ENCODE measurements at regions of chr4 and their contacts with region 1.

Region 1: GRCh38 chr4:152735396-152735859 is 44.1 kb downstream of the TIGD4 start:
- DNase-seq: peak; percentile 38
- H3K4me3 ChIP-seq: no peak overlapping the region
- H3K27ac ChIP-seq: no peak overlapping the region
- H3K4me1 ChIP-seq: peaks cover 5% of the 10 kb centered on the region
- H3K27me3 ChIP-seq: no peaks in the 10 kb centered on the region
- CTCF ChIP-seq: peak; percentile 64 to 66

Region 2: GRCh38 chr4:152454398-152455011 is 280.9 kb before region 1 on chr4:
- CTCF ChIA-PET with region 1: no interaction called
- dilution Hi-C with region 1: no loop called
- in situ Hi-C with region 1: no loop called
- intact Hi-C with region 1: loop called (anchors 1 kb)
- DNase-seq: peak; percentile 24
- H3K4me3 ChIP-seq: no peak overlapping the region
- H3K27ac ChIP-seq: no peak overlapping the region
- H3K4me1 ChIP-seq: no peaks in the 10 kb centered on the region
- H3K27me3 ChIP-seq: no peaks in the 10 kb centered on the region
- CTCF ChIP-seq: peak; percentile 61 to 78

Region 3: GRCh38 chr4:152500800-152501434 is 234.5 kb before region 1 on chr4:
- CTCF ChIA-PET with region 1: no interaction called
- dilution Hi-C with region 1: no loop called
- in situ Hi-C with region 1: loop called in 1 of 2 experiments (anchors 25 kb)
- intact Hi-C with region 1: loop called (anchors 1 kb)
- DNase-seq: peak; percentile 68
- H3K4me3 ChIP-seq: no peak overlapping the region
- H3K27ac ChIP-seq: no peak overlapping the region
- H3K4me1 ChIP-seq: peaks cover 3% of the 10 kb centered on the region
- H3K27me3 ChIP-seq: no peaks in the 10 kb centered on the region
- CTCF ChIP-seq: peak; percentile 69 to 80

Region 4: GRCh38 chr4:152613841-152614721 is 121.3 kb before region 1 on chr4:
- CTCF ChIA-PET with region 1: no interaction called
- dilution Hi-C with region 1: no loop called
- in situ Hi-C with region 1: no loop called
- intact Hi-C with region 1: no loop called
- DNase-seq: no peak
- H3K4me3 ChIP-seq: no peak overlapping the region
- H3K27ac ChIP-seq: no peak overlapping the region
- H3K4me1 ChIP-seq: peaks cover 7% of the 10 kb centered on the region
- H3K27me3 ChIP-seq: no peaks in the 10 kb centered on the region
- CTCF ChIP-seq: no peak

Region 5: GRCh38 chr4:152634110-152634760 is 101.2 kb before region 1 on chr4:
- CTCF ChIA-PET with region 1: no interaction called
- dilution Hi-C with region 1: loop called (anchors 5 kb)
- in situ Hi-C with region 1: loop called in 1 of 2 experiments (anchors 25 kb)
- intact Hi-C with region 1: no loop called
- DNase-seq: peak; percentile 90
- H3K4me3 ChIP-seq: no peak overlapping the region
- H3K27ac ChIP-seq: peak overlapping the region; percentile 92
- H3K4me1 ChIP-seq: peaks cover 28% of the 10 kb centered on the region
- H3K27me3 ChIP-seq: no peaks in the 10 kb centered on the region
- CTCF ChIP-seq: no peak

Region 6: DNA sequence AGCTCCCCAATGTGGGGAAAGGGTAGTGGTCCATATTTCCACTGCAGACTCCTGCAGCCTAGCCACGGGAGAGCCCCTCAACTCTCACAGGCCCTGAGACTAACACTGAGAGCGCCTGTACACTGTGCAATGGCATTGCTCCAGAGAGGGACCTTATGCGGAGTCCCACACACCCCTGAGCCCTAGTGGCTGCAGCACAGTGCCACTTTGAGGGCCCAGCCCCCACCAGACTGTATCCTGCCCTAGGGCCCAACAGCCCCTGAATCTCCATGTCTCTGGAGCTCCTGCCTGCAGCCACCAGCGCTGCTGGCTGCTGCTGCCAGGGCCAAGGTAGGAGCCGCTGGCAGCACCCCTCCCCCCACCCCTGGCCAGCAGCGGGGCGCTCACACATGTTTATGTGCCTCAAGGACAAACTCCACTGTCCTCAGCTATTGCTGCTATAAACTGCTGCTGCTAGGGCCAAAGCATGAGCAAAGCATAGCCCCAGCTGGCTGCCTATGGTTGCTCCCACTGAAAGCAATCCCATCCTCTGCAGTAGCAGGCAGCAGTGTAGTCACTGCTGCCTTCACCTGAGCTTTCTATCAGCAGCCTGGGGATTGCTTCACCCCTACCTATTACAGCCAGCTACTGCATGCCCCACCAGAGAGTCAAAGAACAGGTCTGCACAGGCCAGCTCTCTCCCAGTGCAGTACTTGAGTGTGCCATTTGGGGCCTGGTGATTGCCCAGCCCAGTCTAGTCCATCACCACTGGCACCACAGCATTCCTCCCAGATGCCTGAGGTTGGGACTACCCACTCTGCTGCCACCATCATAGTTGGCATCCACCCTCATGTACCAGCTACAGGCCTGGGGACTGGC is 79.9 kb before region 1 on chr4:
- CTCF ChIA-PET with region 1: no interaction called
- dilution Hi-C with region 1: no loop called
- in situ Hi-C with region 1: no loop called
- intact Hi-C with region 1: loop called (anchors 1 kb)
- DNase-seq: peak; percentile 91
- H3K4me3 ChIP-seq: no peak overlapping the region
- H3K27ac ChIP-seq: peak overlapping the region; percentile 12
- H3K4me1 ChIP-seq: peaks cover 15% of the 10 kb centered on the region
- H3K27me3 ChIP-seq: no peaks in the 10 kb centered on the region
- CTCF ChIP-seq: peak; percentile 36 to 46

Region 7: GRCh38 chr4:152785639-152786615 is 50.5 kb after region 1 on chr4:
- CTCF ChIA-PET with region 1: no interaction called
- dilution Hi-C with region 1: no loop called
- in situ Hi-C with region 1: no loop called
- intact Hi-C with region 1: no loop called
- DNase-seq: no peak
- H3K4me3 ChIP-seq: no peak overlapping the region
- H3K27ac ChIP-seq: no peak overlapping the region
- H3K4me1 ChIP-seq: peaks cover 17% of the 10 kb centered on the region
- H3K27me3 ChIP-seq: no peaks in the 10 kb centered on the region
- CTCF ChIP-seq: no peak

Measured in mammary epithelial cell (primary cell).